Heart left ventricle (tissue), 16 donors: ENCODE measurements at regions of chr1 and their contacts with region 1.

Region 1: DNA sequence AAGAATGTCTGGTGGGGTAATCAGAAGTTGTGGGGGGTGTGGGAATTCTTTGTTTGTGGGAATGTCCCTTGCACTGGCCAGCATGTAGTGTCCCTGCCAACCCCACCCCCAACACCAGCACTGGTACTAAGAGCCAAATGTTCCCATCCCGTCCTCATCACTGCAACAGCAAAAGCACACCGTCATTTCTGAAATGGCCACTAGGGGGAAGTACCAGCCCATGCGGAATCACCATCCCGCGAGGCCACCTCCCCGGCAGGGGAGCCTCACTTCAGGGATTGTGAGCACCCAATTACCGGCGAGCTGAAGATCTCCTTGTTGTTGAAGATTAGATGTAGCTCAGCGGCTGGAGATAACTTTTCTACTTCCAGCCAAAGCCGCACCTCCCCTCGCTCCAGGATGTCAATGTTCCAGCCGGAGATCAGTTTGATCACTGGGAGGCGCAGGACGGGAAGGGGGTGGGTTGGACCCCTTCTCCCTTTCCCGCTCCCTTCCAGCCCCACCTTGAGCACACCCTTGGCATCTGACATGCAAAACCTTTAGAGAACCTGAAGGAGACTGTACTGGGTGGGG is 41.0 kb downstream of the MYOM3 start:
- DNase-seq: peak in 4 of 5 donors; percentile 77 to 80 (median 79)
- ATAC-seq: peak; percentile 63 to 73 (median 66)
- H3K4me3 ChIP-seq: no peak overlapping the region
- H3K27ac ChIP-seq: peak overlapping the region in 8 of 12 donors; percentile 4 to 68 (median 30)
- H3K4me1 ChIP-seq: peaks cover 0 to 38% (median 9%) of the 10 kb centered on the region in 12 donors
- H3K27me3 ChIP-seq: no peaks in the 10 kb centered on the region
- CTCF ChIP-seq: peak; percentile 82 to 91 (median 88)
- POLR2A ChIP-seq: peak in 1 of 2 donors; percentile 19

Region 2: DNA sequence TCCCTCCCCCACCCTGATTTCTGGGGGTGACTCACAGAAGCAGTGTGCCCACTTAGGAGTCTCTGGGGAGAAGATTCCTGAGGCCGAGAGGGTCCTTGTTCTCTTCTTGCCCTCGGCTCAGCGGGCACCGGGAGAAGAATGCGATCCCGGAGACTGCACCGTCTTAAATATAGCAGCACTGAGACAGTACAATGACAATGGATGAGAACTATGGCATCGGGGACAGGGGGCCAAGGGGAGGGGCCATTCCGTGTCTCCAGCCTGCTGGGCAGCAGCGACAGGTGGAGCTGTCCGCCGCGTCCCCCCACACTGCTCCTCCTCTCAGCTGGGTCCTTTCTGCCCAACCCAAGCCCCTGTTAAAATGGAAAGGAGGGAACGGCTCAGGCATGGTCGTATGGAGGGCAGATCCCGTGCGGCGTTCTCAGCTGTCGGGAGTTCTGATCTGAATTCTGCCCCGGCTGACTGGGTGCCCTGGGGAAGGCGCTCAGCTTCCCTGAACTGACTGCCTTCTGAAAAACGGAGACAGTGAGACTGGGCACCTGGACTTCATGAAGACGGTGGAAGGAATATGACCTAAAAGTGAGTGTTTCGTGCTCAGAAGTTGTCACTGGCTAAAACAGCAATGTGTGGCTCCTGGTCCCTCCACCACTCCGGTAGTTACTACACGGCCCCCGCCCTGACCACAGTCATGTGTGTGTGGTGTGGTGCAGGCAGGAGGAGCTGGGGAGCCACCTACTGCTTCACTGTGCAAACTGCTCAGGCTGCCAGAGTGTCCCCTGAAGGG is 41.3 kb after region 1 on chr1 and contains the start of gene MYOM3:
- intact Hi-C with region 1: loop called in 9 of 10 experiments (anchors 1 to 5 kb)
- DNase-seq: peak in 4 of 5 donors; percentile 74 to 89 (median 85)
- ATAC-seq: peak; percentile 77 to 82 (median 79)
- H3K4me3 ChIP-seq: peak within 1 kb of the TSS; percentile 29 to 62 (median 53)
- H3K27ac ChIP-seq: peak within 1 kb of the TSS; percentile 76 to 100 (median 95)
- H3K4me1 ChIP-seq: peaks cover 0 to 45% (median 8%) of the 10 kb centered on the region in 12 donors
- H3K27me3 ChIP-seq: peaks cover 0 to 7% (median 0%) of the 10 kb centered on the region in 9 donors
- CTCF ChIP-seq: peak; percentile 14 to 72 (median 54)
- POLR2A ChIP-seq: peak in 1 of 2 donors; percentile 69
- total RNA-seq, gene MYOM3: 230 to 379 (median 288) TPM

Region 3: GRCh38 chr1:24186993-24187805 is 116.3 kb after region 1 on chr1 and contains the start of gene IFNLR1:
- intact Hi-C with region 1: loop called in 1 of 10 experiments (anchors 5 kb)
- DNase-seq: peak; percentile 42 to 81 (median 61)
- ATAC-seq: peak; percentile 42 to 86 (median 82)
- H3K4me3 ChIP-seq: peak within 1 kb of the TSS; percentile 33 to 75 (median 57)
- H3K27ac ChIP-seq: peak within 1 kb of the TSS in 8 of 12 donors; percentile 5 to 81 (median 40)
- H3K4me1 ChIP-seq: peaks cover 0 to 45% (median 8%) of the 10 kb centered on the region in 12 donors
- H3K27me3 ChIP-seq: peaks cover 0 to 28% (median 5%) of the 10 kb centered on the region in 9 donors
- CTCF ChIP-seq: no peak
- POLR2A ChIP-seq: no peak
- total RNA-seq, gene IFNLR1: 1.9 to 3.4 (median 2.7) TPM

Region 4: DNA sequence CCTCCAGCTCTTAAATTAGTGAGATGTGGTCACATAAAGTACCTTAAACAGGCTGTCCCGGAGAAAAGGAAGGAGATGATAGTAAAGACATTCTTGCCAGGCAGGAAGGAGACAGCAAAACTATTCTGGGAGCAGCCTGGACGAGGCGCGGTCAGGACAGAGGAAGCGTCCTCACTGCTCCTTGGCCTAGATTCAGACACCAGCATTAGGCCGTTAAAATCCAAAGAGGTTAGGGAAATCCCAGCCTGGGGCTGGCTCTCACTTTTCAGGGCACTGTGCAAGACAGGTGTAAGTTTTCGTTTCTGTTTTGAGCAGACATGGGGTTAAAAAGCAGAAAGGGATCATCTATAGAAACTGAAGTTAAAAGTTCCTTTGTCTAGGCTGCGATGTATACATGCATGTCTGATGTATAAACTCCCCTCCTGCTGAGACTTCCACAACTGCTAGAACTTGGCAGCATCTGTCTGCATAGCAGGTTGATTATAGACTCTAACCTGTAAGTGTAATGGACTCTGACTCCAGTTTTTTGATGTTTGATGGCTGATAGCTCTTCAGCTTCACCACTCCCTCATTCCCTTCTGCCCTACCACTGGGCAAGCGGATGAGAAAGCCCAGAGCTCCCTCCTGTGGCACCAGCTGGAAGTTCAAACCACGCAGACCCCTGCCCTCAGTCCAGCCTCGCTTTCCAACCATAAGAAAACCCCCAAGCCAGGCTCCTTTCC is 321.1 kb after region 1 on chr1:
- intact Hi-C with region 1: loop called in 2 of 10 experiments (anchors 5 kb)
- DNase-seq: peak in 4 of 5 donors; percentile 58 to 67 (median 60)
- ATAC-seq: peak; percentile 83 to 89 (median 86)
- H3K4me3 ChIP-seq: peak overlapping the region in 9 of 12 donors; percentile 14 to 38 (median 25)
- H3K27ac ChIP-seq: peak overlapping the region; percentile 58 to 86 (median 74)
- H3K4me1 ChIP-seq: peaks cover 0 to 21% (median 14%) of the 10 kb centered on the region in 12 donors
- H3K27me3 ChIP-seq: no peaks in the 10 kb centered on the region
- CTCF ChIP-seq: peak; percentile 61 to 80 (median 72)
- POLR2A ChIP-seq: no peak

Region 5: GRCh38 chr1:24609949-24610382 is 539.1 kb after region 1 on chr1:
- intact Hi-C with region 1: no loop called
- DNase-seq: no peak
- ATAC-seq: no peak
- H3K4me3 ChIP-seq: no peak overlapping the region
- H3K27ac ChIP-seq: no peak overlapping the region
- H3K4me1 ChIP-seq: no peaks in the 10 kb centered on the region
- H3K27me3 ChIP-seq: peaks cover 0 to 10% (median 3%) of the 10 kb centered on the region in 9 donors
- CTCF ChIP-seq: no peak
- POLR2A ChIP-seq: no peak